ENCODE measurements at regions of chr5 and their contacts with region 1.

Region 1: GRCh38 chr5:72280581-72281170 is 39.4 kb downstream of the MRPS27 start:
- DNase-seq: no peak
- ATAC-seq: peak in 1 of 2 donors; percentile 64

Region 2: GRCh38 chr5:72209515-72210115 is 71.1 kb before region 1 on chr5:
- intact Hi-C with region 1: loop called in 1 of 2 experiments (anchors 10 kb)
- DNase-seq: no peak
- ATAC-seq: no peak

Measured in left cardiac atrium (tissue), 4 donors.